Heart right ventricle (tissue), 16 donors: ENCODE measurements at regions of chr4 and their contacts with region 1.

Region 1: GRCh38 chr4:53377319-53378170 is at the start of gene FIP1L1:
- DNase-seq: peak; percentile 94 to 96
- ATAC-seq: peak; percentile 99 to 100 (median 100)
- H3K4me3 ChIP-seq: peak within 1 kb of the TSS; percentile 72 to 93 (median 86)
- H3K27ac ChIP-seq: peak within 1 kb of the TSS; percentile 67 to 94 (median 90)
- H3K4me1 ChIP-seq: peaks cover 0 to 33% (median 18%) of the 10 kb centered on the region in 9 donors
- H3K27me3 ChIP-seq: peaks cover 0 to 2% (median 0%) of the 10 kb centered on the region in 7 donors
- CTCF ChIP-seq: peak in 1 of 9 donors; percentile 8
- total RNA-seq, gene FIP1L1: 26.9 to 47.0 (median 33.7) TPM

Region 2: GRCh38 chr4:52721968-52722815 is 655.4 kb before region 1 on chr4:
- intact Hi-C with region 1: no loop called
- DNase-seq: peak; percentile 91 to 97
- ATAC-seq: peak; percentile 98 to 100 (median 99)
- H3K4me3 ChIP-seq: peak overlapping the region; percentile 67 to 96 (median 88)
- H3K27ac ChIP-seq: peak overlapping the region; percentile 63 to 93 (median 84)
- H3K4me1 ChIP-seq: peaks cover 0 to 15% (median 10%) of the 10 kb centered on the region in 9 donors
- H3K27me3 ChIP-seq: no peaks in the 10 kb centered on the region
- CTCF ChIP-seq: peak in 1 of 9 donors; percentile 34

Region 3: GRCh38 chr4:53015681-53016080 is 361.9 kb before region 1 on chr4:
- intact Hi-C with region 1: loop called in 2 of 10 experiments (anchors 2 to 10 kb)
- DNase-seq: peak in 1 of 2 donors; percentile 38
- ATAC-seq: peak in 1 of 8 donors; percentile 29
- H3K4me3 ChIP-seq: no peak overlapping the region
- H3K27ac ChIP-seq: no peak overlapping the region
- H3K4me1 ChIP-seq: peaks cover 6 to 70% (median 55%) of the 10 kb centered on the region in 9 donors
- H3K27me3 ChIP-seq: no peaks in the 10 kb centered on the region
- CTCF ChIP-seq: peak; percentile 35 to 80 (median 66)

Region 4: GRCh38 chr4:53365486-53366300 is 11.9 kb before region 1 on chr4 and contains the start of gene SCFD2:
- intact Hi-C with region 1: loop called in 2 of 10 experiments (anchors 1 kb)
- DNase-seq: peak; percentile 93 to 99
- ATAC-seq: peak; percentile 100
- H3K4me3 ChIP-seq: peak within 1 kb of the TSS; percentile 69 to 98 (median 88)
- H3K27ac ChIP-seq: peak within 1 kb of the TSS in 9 of 10 donors; percentile 14 to 79 (median 68)
- H3K4me1 ChIP-seq: peaks cover 0 to 39% (median 29%) of the 10 kb centered on the region in 9 donors
- H3K27me3 ChIP-seq: peaks cover 0 to 24% (median 10%) of the 10 kb centered on the region in 7 donors
- CTCF ChIP-seq: no peak
- total RNA-seq, gene SCFD2: 7.5 to 15.0 (median 10.2) TPM

Region 5: DNA sequence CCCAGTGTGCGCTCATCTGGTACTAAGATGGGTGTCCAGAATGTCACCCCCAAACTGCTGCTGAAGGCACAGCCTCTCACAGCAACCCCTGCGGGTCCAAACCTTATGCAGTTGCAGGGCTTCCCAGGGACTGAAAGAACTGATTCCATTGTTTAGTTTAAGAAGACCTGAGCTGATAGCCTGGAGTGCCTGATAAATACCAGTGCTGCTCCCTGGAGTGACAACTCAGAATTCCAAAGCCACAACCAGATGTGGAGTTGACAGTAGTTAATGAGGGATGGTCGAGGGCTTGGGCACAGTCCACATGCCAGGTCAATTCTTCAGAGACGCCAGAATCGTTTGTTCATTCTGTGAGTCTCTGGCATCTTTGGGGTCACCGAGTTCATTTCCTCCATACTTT is 142.6 kb after region 1 on chr4:
- intact Hi-C with region 1: no loop called
- DNase-seq: no peak
- ATAC-seq: no peak
- H3K4me3 ChIP-seq: no peak overlapping the region
- H3K27ac ChIP-seq: no peak overlapping the region
- H3K4me1 ChIP-seq: peaks cover 0 to 6% (median 0%) of the 10 kb centered on the region in 9 donors
- H3K27me3 ChIP-seq: no peaks in the 10 kb centered on the region
- CTCF ChIP-seq: no peak

Region 6: DNA sequence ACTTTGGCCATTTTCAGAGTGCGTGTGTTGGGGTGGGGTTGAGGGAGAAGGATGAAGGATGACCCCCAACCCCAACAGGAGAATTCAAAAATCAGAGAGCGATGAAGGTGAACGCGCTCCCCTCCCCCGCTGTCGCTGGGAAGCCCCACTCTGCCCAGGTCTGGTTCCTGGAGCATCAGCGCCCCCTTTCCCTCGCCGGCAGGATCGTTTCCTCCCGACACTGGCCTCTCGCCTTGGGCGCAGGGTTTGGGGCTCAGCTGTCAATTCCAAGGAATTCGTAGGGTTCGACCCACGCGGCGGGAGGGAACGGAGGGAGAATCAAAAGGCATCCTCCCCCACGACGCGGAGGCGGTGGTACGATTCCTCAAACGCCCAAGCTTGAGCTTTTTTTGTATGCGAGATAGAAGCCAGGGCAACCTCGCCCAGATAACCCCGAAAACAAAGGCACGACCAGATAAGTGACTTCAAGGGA is 850.5 kb after region 1 on chr4:
- intact Hi-C with region 1: loop called in 3 of 10 experiments (anchors 5 to 10 kb)
- DNase-seq: peak; percentile 75 to 79
- ATAC-seq: peak; percentile 61 to 81 (median 68)
- H3K4me3 ChIP-seq: peak overlapping the region; percentile 4 to 64 (median 54)
- H3K27ac ChIP-seq: peak overlapping the region; percentile 6 to 85 (median 68)
- H3K4me1 ChIP-seq: peaks cover 5 to 74% (median 62%) of the 10 kb centered on the region in 9 donors
- H3K27me3 ChIP-seq: peaks cover 20 to 100% (median 98%) of the 10 kb centered on the region in 7 donors
- CTCF ChIP-seq: peak; percentile 49 to 87 (median 71)